ENCODE measurements at regions of chr7 and their contacts with region 1.

Region 1: DNA sequence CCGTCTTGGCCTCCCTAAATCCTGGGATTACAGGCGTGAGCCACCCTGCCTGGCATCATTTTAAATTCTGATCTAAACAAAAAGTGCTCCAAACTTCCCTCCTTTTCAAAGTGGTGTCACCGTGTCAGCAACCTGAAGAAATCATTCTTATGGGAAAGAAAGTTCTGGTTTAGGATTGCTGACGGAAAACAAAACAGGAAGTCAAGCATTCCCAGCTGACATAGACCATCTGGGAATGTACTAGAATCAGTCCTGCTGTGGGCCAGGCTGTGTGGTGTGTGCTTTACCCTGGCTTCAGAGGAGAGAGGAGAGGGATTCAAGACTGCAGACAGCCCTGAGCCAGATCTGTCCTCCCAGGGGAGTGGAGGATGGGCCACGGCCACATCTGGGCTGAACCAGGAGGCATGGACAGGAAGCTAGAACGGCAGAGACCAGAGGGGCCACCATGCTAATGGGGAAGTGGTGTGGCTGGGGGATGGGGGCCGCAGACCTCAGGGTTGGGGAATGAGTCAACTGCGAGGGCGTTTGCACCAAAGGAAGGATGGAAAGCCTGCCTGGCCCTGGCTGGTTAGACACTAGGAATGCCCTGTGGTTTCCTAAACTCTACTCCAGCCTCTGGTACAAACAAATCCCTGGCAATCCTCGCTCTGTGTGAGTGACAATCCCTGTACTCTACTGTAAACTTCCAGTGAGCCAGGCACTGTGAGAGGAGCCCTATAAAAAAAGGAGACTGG is 16.7 kb upstream of the CLIP2 start:
- DNase-seq: peak; percentile 71
- ATAC-seq: peak; percentile 81
- H3K4me3 Mint-ChIP-seq: peak overlapping the region; percentile 70
- H3K27ac Mint-ChIP-seq: peak overlapping the region; percentile 80
- H3K4me1 Mint-ChIP-seq: peaks cover 55% of the 10 kb centered on the region
- H3K27me3 Mint-ChIP-seq: no peaks in the 10 kb centered on the region
- CTCF ChIP-seq: no peak

Region 2: DNA sequence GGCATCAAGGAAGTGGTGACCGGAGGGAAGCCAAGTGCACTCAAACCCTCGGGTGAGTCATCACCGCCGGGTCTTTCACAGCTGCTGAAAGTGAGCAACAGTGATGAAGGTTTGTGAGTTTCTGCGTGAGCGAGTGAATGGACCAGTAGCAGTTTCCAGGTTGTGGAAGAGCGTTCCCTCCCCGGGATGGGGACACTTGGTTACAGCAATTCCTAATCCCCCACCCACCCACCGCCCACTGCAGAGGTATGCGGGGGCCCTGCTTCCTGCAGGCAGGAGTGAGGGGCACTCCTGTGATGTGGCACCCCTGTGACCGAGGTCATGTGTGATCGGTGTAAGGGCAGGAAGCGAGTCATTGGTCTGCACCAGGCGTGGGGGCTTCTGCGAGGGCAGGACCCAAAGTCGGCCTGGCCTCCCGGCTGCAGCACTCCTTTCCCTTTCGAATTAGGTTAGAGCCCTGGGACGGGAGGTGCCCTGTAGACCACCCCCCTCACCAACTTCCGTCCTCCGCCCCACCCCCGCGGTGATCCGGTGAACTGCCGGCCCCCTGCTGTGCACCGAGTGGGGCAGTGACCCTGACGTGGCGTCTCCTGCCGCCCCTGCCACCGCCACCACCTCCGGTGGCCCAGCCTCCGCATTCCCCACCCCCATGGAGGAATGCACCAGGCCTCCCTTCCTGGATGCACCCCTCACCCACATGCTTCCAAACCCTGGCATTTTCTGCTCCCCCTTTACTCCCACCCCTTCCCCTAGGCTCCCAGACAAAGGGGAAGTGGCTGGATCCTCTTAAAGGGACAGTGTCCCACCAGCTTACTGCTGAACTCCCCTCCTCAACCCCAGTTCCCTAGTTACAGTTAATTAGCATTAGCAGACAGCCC is 178.0 kb before region 1 on chr7:
- CTCF ChIA-PET with region 1: no interaction called
- POLR2A ChIA-PET with region 1: interaction called, 12 read pairs
- intact Hi-C with region 1: no loop called
- DNase-seq: peak; percentile 46
- ATAC-seq: peak; percentile 72
- H3K4me3 Mint-ChIP-seq: peak overlapping the region; percentile 90
- H3K27ac Mint-ChIP-seq: peak overlapping the region; percentile 95
- H3K4me1 Mint-ChIP-seq: peaks cover 47% of the 10 kb centered on the region
- H3K27me3 Mint-ChIP-seq: no peaks in the 10 kb centered on the region
- CTCF ChIP-seq: no peak

Region 3: DNA sequence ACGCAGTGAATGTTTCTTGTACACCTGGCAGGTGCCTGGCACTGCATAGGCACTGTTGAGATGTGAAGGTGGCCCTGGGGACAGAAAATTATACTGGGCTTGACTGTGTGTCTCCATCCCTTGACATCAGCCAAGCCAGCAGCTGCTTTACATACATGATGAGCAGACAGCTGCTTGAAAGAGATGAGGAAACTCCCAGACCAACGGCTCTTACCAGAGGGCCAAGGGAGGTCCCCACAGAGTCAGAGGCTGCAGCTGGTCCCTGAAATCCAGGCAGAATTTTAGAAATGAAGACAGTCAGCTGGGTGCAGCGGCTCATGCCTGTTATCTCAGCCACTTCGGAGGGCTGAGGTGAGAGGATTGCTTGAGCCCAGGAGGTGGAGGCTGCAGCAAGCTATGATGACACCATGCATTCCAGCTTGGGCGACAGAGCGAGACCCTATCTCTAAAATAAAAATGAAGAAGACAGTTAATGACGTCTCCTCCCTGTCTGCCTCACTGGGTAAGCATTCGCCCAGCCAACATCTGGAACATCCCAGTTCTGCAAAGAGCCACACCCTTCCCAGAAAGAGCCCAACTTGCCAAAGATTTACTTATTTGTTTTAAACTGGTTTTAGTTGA is 171.3 kb before region 1 on chr7:
- CTCF ChIA-PET with region 1: no interaction called
- POLR2A ChIA-PET with region 1: interaction called, 5 read pairs
- intact Hi-C with region 1: loop called (anchors 5 kb)
- DNase-seq: peak; percentile 60
- ATAC-seq: peak; percentile 79
- H3K4me3 Mint-ChIP-seq: peak overlapping the region; percentile 70
- H3K27ac Mint-ChIP-seq: peak overlapping the region; percentile 98
- H3K4me1 Mint-ChIP-seq: peaks cover 38% of the 10 kb centered on the region
- H3K27me3 Mint-ChIP-seq: no peaks in the 10 kb centered on the region
- CTCF ChIP-seq: no peak

Region 4: DNA sequence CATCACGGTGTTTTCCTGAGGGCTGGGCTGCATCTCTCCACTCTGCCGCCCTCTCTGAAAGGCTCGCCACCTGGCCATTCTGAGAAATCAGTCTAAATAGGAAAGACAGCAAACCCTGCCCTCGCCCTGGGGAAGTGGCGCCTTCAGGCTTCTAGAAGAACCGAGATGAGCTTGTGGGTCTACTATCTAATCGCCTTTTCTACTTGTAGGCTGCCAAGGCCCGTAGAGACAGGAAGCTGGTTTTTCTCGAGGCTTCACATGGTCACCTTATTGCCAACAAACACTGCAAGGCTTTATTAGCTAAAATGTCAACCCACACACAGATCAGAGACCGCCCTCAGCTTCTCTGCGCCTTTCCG is 41.3 kb before region 1 on chr7:
- CTCF ChIA-PET with region 1: no interaction called
- POLR2A ChIA-PET with region 1: interaction called, 8 read pairs
- intact Hi-C with region 1: loop called (anchors 1 kb)
- DNase-seq: peak; percentile 63
- ATAC-seq: peak; percentile 85
- H3K4me3 Mint-ChIP-seq: peak overlapping the region; percentile 55
- H3K27ac Mint-ChIP-seq: peak overlapping the region; percentile 92
- H3K4me1 Mint-ChIP-seq: peaks cover 68% of the 10 kb centered on the region
- H3K27me3 Mint-ChIP-seq: no peaks in the 10 kb centered on the region
- CTCF ChIP-seq: no peak

Region 5: DNA sequence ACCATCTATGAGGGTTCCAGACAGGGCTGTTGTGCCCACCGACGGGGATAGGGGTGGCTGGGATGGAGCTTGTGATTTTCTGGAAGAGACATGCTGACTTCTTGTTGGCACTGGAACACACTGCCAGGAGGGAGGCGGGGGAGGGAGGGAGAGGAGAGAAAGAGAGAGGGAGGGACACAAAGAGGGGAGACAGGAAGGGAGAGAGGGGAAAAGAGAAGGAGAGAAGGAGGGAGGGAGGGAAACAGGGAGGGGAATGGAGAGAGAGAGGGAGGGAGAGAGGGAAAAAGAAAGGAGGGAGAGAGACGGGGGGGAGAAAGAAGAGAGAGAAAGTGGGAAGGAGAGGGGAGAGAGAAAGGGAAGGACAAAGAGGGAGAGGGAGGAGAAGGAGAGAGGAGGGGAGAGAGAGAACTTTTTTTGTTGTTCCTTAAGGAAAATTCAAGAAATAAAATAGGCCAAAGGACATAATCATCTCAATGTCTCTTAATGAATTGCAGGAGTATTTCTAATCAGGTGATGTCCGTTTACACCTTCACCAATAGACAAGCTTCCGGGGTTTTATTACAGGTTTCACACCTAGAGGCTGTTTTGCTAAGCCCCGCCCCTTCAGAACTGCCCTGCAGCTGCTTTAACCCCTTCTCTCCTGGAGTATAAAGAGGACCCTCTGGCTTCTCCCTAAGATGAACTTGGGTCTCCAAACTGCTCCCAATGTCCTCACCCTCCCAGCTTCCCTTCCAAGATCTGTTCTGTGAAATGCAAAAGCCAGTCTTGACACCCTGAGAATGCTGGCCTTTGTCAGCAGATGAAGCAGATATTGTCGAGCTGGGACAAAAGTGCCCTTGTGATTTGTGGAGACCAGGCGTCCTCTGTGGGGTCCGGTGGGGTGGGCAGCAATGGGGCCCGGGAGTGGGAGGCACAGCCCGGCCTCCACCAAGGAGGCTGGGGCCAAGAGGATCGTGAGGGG is 99.2 kb after region 1 on chr7:
- CTCF ChIA-PET with region 1: no interaction called
- POLR2A ChIA-PET with region 1: interaction called, 10 read pairs
- intact Hi-C with region 1: no loop called
- DNase-seq: no peak
- ATAC-seq: no peak
- H3K4me3 Mint-ChIP-seq: no peak overlapping the region
- H3K27ac Mint-ChIP-seq: no peak overlapping the region
- H3K4me1 Mint-ChIP-seq: peaks cover 16% of the 10 kb centered on the region
- H3K27me3 Mint-ChIP-seq: no peaks in the 10 kb centered on the region
- CTCF ChIP-seq: no peak

Region 6: GRCh38 chr7:74401137-74401859 is 128.8 kb after region 1 on chr7:
- CTCF ChIA-PET with region 1: interaction called, 10 read pairs
- POLR2A ChIA-PET with region 1: no interaction called
- intact Hi-C with region 1: loop called (anchors 10 kb)
- DNase-seq: peak; percentile 69
- ATAC-seq: peak; percentile 84
- H3K4me3 Mint-ChIP-seq: no peak overlapping the region
- H3K27ac Mint-ChIP-seq: no peak overlapping the region
- H3K4me1 Mint-ChIP-seq: no peaks in the 10 kb centered on the region
- H3K27me3 Mint-ChIP-seq: no peaks in the 10 kb centered on the region
- CTCF ChIP-seq: no peak

Measured in activated B cell treated with CpG ODN at 0.5 μM for 24 hours (primary cell).